HepG2 (cell line): ENCODE measurements at regions of chr1 and their contacts with region 1.

Region 1: DNA sequence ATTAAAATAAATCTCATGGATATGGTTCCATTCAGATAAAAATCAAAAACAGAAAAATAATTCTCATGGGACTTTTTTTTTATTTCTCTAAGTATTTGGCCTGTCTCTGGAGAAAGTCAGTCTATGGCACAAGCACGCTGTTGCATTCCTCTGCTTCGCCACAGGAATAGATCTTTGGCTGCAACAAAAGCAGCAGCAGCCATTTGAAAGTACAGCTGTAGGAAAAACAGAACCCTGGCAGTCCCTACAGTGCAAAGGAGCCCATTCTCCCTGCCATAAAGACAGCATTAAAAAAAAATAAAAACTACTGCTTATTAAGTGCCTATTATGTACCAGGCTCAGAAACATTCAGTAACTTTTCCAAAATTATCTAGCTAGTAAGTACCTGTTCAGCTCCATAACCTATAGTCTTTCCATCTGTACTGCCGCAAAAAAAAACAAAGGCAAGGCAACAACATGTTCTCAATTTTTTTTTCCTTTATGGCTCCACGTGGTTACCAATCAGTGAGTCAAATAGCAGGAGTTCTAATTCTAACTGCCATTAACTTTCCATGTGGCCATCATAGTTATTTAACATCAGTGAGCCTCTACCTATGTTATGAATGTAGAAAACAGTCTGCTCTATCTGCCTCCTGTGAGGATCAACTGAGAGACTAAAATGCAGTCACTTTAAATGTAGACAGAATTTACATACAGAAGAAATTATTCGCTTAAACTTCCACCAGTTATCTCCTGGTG is 22.7 kb downstream of the SLC35D1 start:
- DNase-seq: no peak
- ATAC-seq: no peak
- H3K4me3 ChIP-seq: no peak overlapping the region
- H3K27ac ChIP-seq: no peak overlapping the region
- H3K4me1 ChIP-seq: no peaks in the 10 kb centered on the region
- H3K27me3 ChIP-seq: no peaks in the 10 kb centered on the region
- CTCF ChIP-seq: no peak
- EP300 ChIP-seq: no peak
- POLR2A ChIP-seq: no peak
- RAD21 ChIP-seq: no peak

Region 2: DNA sequence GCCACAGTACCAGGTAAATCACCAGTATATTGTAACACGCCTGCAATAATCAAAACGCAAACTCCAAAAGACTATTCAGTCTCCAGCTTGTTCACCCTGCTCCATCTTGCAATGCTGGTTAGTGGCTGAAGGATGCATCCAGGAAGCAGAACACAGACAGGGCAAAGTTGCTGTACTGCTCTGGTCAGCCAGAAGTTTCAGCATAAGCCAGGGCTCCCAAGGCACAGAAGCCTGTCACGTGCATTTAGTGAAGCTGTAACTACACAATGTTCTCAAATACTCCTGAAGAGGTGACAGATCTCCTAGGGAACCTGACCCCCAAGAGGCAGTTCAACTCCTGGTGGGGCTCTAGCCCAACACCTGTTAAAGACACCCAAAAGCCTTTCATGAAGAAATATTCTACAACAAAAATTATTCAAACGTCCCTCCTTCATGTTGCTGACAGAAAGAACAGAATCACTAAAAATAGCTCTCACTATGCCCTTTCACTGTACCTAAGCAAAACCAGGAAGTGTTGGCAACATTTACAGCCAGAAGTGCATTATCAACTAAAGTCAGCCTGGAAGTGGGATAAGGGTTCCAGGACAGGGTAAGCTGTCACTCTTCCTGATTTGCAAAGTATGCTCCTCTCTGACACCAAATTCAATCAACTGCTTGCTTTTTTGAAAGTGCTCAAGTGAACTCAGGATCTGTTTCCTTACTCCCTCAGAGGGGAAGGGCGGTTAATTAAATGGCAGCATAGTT is 29.4 kb before region 1 on chr1:
- CTCF ChIA-PET with region 1: no interaction called
- POLR2A ChIA-PET with region 1: no interaction called
- in situ Hi-C with region 1: no loop called
- intact Hi-C with region 1: loop called (anchors 5 kb)
- DNase-seq: no peak
- ATAC-seq: no peak
- H3K4me3 ChIP-seq: no peak overlapping the region
- H3K27ac ChIP-seq: no peak overlapping the region
- H3K4me1 ChIP-seq: no peaks in the 10 kb centered on the region
- H3K27me3 ChIP-seq: no peaks in the 10 kb centered on the region
- CTCF ChIP-seq: no peak
- EP300 ChIP-seq: no peak
- POLR2A ChIP-seq: no peak
- RAD21 ChIP-seq: no peak